Activated CD4-positive, alpha-beta T cell treated with anti-CD3 and anti-CD28 coated beads for 36 hours (primary cell): ENCODE measurements at regions of chr6 and their contacts with region 1.

Region 1: DNA sequence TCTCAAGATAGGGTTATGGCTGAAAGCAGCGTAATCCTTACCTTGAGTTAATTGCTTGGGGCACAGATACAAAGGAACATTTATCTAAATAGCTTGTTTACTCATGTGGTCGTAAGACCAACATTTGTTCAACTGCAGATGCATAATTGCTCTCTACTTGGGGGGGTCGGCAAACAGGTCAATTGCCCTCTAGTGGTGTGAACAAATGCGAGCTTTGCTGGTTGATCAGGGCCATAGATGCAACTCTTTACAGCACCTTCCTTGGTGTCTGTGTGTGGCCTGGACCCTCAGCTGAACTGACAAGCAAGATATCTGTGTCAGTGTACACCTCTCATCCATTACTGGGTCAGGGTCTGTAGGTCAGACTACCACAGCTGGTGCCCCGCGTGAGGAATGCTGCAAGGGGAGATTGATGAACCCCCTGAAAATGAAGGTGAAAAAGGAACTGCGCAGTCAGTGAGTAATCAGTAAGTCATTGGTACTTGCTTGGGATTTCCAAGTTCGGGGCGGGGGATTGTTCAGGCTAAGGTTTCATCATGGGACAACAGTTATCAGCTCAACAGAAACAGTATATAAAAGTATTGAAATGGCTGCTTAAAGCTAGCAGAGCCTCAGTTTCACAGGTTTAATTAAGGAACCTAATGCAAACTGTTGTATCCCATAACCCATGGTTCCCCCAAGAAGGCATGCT is 24.0 kb downstream of the HLA-DPA1 start:
- DNase-seq: no peak
- ATAC-seq: no peak
- H3K4me3 Mint-ChIP-seq: no peak overlapping the region
- H3K27ac Mint-ChIP-seq: no peak overlapping the region
- H3K4me1 Mint-ChIP-seq: no peaks in the 10 kb centered on the region
- H3K27me3 Mint-ChIP-seq: peaks cover 25% of the 10 kb centered on the region

Region 2: GRCh38 chr6:32713241-32713640 is 336.2 kb before region 1 on chr6:
- CTCF ChIA-PET with region 1: no interaction called
- POLR2A ChIA-PET with region 1: no interaction called
- intact Hi-C with region 1: no loop called
- DNase-seq: no peak
- ATAC-seq: no peak
- H3K4me3 Mint-ChIP-seq: no peak overlapping the region
- H3K27ac Mint-ChIP-seq: no peak overlapping the region
- H3K4me1 Mint-ChIP-seq: no peaks in the 10 kb centered on the region
- H3K27me3 Mint-ChIP-seq: no peaks in the 10 kb centered on the region

Region 3: DNA sequence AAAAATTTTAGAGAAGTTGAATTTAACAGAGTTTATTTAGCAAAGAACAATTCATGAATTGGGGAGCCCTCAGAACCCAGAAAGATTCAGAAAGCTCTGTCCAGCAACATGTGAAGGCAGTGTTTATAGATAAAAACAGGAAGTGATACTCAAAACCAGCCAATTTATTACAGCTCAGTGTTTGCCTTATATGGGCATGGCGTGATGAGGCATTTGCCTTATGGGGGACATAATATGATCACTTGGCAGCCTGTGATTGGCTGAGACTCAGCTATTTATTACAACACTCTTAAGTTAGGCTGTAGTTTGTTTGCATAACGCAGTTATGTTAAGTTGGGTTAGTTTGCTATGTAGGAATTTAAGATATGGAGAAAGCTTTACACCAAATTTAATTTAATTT is 12.5 kb after region 1 on chr6:
- CTCF ChIA-PET with region 1: no interaction called
- POLR2A ChIA-PET with region 1: no interaction called
- intact Hi-C with region 1: no loop called
- DNase-seq: peak; percentile 15
- ATAC-seq: peak; percentile 63
- H3K4me3 Mint-ChIP-seq: no peak overlapping the region
- H3K27ac Mint-ChIP-seq: no peak overlapping the region
- H3K4me1 Mint-ChIP-seq: peaks cover 7% of the 10 kb centered on the region
- H3K27me3 Mint-ChIP-seq: no peaks in the 10 kb centered on the region

Region 4: GRCh38 chr6:33105916-33106871 is 56.7 kb after region 1 on chr6:
- CTCF ChIA-PET with region 1: no interaction called
- POLR2A ChIA-PET with region 1: no interaction called
- intact Hi-C with region 1: loop called in 1 of 2 experiments (anchors 5 kb)
- DNase-seq: no peak
- ATAC-seq: no peak
- H3K4me3 Mint-ChIP-seq: no peak overlapping the region
- H3K27ac Mint-ChIP-seq: no peak overlapping the region
- H3K4me1 Mint-ChIP-seq: peaks cover 2% of the 10 kb centered on the region
- H3K27me3 Mint-ChIP-seq: peaks cover 36% of the 10 kb centered on the region